ENCODE measurements at regions of chr1 and their contacts with region 1.

Region 1: GRCh38 chr1:165726169-165726568 is 27.8 kb upstream of the ALDH9A1 start:
- DNase-seq: no peak
- H3K4me3 ChIP-seq: no peak overlapping the region
- H3K27ac ChIP-seq: no peak overlapping the region
- H3K4me1 ChIP-seq: no peaks in the 10 kb centered on the region
- H3K27me3 ChIP-seq: no peaks in the 10 kb centered on the region
- CTCF ChIP-seq: no peak
- EP300 ChIP-seq: no peak
- POLR2A ChIP-seq: no peak

Region 2: GRCh38 chr1:165610885-165611284 is 115.3 kb before region 1 on chr1:
- intact Hi-C with region 1: loop called in 1 of 4 experiments (anchors 5 kb)
- DNase-seq: no peak
- H3K4me3 ChIP-seq: no peak overlapping the region
- H3K27ac ChIP-seq: no peak overlapping the region
- H3K4me1 ChIP-seq: no peaks in the 10 kb centered on the region
- H3K27me3 ChIP-seq: no peaks in the 10 kb centered on the region
- CTCF ChIP-seq: no peak
- EP300 ChIP-seq: no peak
- POLR2A ChIP-seq: no peak